Endothelial cell of umbilical vein (primary cell): ENCODE measurements at regions of chr17 and their contacts with region 1.

Region 1: DNA sequence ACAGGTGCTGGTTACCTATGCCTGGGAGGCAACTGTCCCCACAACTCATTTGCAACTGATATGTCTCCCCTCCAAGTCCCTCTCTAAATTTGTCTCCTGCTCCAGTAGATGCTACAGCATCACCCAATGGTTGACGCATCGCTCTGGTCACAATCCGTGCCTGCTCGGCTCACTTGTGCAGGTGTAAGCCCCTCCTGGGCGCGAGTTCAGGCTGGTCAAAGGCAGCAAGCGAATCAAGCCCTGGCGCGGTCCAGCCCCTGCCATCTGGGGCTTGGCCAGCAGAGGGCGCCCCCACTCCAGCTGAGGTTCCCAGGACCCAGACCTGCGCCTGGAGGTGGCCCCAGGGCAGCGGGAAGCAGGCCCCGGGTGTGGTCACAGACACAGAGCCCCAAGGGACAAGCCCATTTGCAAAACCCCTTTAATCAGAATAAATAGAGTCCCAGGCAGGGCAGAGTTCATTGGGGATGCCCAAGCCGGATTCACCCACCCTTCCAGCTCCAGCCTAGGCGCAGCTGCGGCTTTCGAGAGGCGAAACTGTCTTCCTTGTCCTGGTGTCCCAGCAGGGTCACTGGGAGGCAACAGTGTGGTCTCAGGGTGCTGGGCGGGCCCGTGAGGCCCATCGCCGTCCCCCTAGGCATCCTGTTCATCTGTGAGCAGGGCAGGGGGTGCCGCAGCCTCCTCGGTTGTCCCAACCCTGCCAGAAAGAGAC is 15.9 kb downstream of the TMC6 start:
- DNase-seq: peak; percentile 51
- H3K4me3 ChIP-seq: no peak overlapping the region
- H3K27ac ChIP-seq: no peak overlapping the region
- H3K4me1 ChIP-seq: no peaks in the 10 kb centered on the region
- H3K27me3 ChIP-seq: no peaks in the 10 kb centered on the region
- CTCF ChIP-seq: peak; percentile 98 to 99
- POLR2A ChIP-seq: no peak

Region 2: GRCh38 chr17:78058001-78058400 is 54.7 kb before region 1 on chr17:
- CTCF ChIA-PET with region 1: no interaction called
- POLR2A ChIA-PET with region 1: no interaction called
- dilution Hi-C with region 1: no loop called
- intact Hi-C with region 1: no loop called
- DNase-seq: no peak
- H3K4me3 ChIP-seq: no peak overlapping the region
- H3K27ac ChIP-seq: no peak overlapping the region
- H3K4me1 ChIP-seq: peaks cover 17% of the 10 kb centered on the region
- H3K27me3 ChIP-seq: no peaks in the 10 kb centered on the region
- CTCF ChIP-seq: no peak
- POLR2A ChIP-seq: no peak

Region 3: DNA sequence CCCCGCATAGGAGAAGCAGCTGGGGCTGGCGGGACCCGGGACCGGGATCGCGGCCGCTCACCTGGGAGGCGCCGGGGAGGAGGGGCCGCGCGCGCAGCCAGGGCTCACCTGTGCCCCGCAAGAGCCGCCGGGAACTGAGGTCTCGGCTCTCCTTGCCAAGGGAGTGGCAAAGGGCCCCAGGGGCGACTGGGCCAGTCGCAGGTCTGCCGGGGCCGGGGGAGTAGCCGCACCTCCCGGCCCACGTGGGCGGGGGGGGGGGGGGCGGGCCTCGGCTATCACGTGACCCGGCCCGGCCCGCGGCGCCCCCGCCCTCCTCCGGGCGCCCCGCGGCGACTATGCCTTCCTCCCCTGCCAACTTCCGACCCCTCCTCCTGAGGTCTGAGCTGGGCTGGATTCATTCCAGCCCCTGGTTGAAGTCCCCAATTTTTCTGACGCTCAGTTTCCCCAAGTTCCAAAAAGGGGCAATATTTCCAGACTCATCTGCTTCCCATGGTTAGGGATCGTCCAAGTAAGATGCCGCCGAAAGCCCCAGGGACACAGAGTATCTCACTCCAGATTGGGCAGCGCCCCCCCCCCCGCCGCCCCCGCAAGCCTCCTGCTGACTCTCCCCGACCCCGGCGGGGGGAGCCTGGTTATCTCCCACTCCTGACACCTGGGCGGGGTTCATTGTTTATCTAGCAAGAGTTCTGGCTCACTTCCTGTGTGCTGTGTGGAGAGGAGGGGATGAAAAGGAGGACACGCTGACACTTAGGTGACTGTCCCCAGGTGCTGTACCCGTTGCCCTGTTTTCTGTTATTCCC is 16.1 kb after region 1 on chr17 and contains the start of gene TMC6:
- CTCF ChIA-PET with region 1: interaction called, 14 read pairs
- POLR2A ChIA-PET with region 1: no interaction called
- dilution Hi-C with region 1: no loop called
- intact Hi-C with region 1: no loop called
- DNase-seq: peak; percentile 42
- H3K4me3 ChIP-seq: peak within 1 kb of the TSS; percentile 52 to 87 (median 67)
- H3K27ac ChIP-seq: peak within 1 kb of the TSS; percentile 56
- H3K4me1 ChIP-seq: peaks cover 26% of the 10 kb centered on the region
- H3K27me3 ChIP-seq: no peaks in the 10 kb centered on the region
- CTCF ChIP-seq: no peak
- POLR2A ChIP-seq: no peak
- total RNA-seq, gene TMC6: 58.0 and 72.4 TPM in 2 replicates

Region 4: GRCh38 chr17:78133971-78134898 is 21.6 kb after region 1 on chr17:
- CTCF ChIA-PET with region 1: interaction called, 10 read pairs
- POLR2A ChIA-PET with region 1: no interaction called
- dilution Hi-C with region 1: no loop called
- intact Hi-C with region 1: loop called (anchors 1 kb)
- DNase-seq: peak; percentile 52
- H3K4me3 ChIP-seq: no peak overlapping the region
- H3K27ac ChIP-seq: no peak overlapping the region
- H3K4me1 ChIP-seq: peaks cover 11% of the 10 kb centered on the region
- H3K27me3 ChIP-seq: no peaks in the 10 kb centered on the region
- CTCF ChIP-seq: peak; percentile 53 to 76
- POLR2A ChIP-seq: no peak